ENCODE measurements at regions of chr6 and their contacts with region 1.

Region 1: DNA sequence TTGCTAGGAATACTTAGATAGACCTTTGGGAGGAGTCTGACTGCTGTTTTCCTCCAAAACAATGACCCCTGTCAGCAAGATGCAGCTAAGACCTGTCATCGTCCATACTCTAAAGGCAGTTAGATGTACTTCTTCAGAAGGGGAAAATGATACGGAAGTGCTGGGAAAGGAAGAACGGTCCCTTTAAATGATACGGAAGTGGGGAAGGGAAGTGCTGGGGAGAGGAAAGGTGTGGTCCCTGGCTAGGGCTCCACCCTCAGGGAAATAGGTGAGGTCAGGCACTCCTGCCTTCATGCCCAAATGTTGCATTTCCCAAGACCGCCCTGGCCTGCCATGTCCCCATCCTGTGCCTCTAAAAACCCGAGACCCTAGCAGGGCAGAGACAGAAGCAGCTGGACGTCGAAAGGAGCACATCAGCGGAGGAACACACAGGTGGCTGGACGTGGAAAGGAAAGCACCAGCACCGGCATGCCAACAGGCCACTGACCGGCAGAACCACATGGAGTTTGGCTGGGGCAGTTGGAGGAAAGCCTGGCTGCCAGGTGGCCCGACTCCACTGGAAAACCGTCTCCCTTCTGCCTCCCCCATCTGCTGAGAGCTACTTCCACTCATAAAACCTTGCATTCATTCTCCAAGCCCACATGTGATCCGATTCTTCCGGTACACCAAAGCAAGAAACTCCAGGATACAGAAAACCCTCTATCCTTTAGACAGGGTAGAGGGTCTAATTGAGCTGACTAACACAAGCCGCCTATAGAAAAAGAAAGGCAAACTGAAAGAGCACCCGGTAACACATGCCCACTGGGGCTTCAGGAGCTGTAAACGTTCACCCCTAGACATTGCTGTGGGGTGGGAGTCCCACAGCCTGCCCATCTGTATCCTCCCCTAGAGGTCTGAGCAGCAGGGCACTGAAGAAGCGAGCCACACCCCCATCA is 94.6 kb downstream of the FAXC start:
- DNase-seq: no peak

Region 2: GRCh38 chr6:99219788-99220187 is 35.1 kb before region 1 on chr6:
- intact Hi-C with region 1: loop called in 1 of 2 experiments (anchors 1 kb)
- DNase-seq: no peak

Region 3: GRCh38 chr6:100001915-100002388 is 747.1 kb after region 1 on chr6:
- intact Hi-C with region 1: no loop called
- DNase-seq: no peak